Mammary epithelial cell (primary cell): ENCODE measurements at regions of chr15 and their contacts with region 1.

Region 1: GRCh38 chr15:81000624-81001151 is at the start of gene TLNRD1:
- DNase-seq: peak; percentile 87
- H3K4me3 ChIP-seq: peak within 1 kb of the TSS; percentile 54 to 80 (median 72)
- H3K27ac ChIP-seq: peak within 1 kb of the TSS; percentile 90
- H3K4me1 ChIP-seq: peaks cover 13% of the 10 kb centered on the region
- H3K27me3 ChIP-seq: no peaks in the 10 kb centered on the region
- CTCF ChIP-seq: no peak
- total RNA-seq, gene TLNRD1: 16.8 to 18.1 TPM

Region 2: DNA sequence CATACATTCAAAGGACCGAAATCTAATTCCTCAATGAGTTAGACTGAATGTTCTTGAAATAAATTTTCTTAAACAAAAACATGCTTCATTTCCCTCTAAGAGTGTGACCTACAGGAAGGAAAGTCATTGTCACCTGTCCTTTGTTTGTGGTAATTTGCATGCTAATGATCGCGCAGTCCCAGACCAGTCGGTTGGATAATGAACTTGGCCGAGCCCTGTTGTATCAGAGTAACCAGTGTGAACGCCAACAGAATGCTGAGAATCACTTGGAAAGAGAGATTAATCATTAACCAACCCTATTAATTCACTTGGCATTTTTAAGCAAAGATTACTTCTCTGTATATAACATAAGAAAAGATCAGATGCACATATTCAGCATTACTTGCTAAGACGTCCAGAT is 604.6 kb before region 1 on chr15:
- CTCF ChIA-PET with region 1: no interaction called
- dilution Hi-C with region 1: no loop called
- in situ Hi-C with region 1: no loop called
- intact Hi-C with region 1: no loop called
- DNase-seq: no peak
- H3K4me3 ChIP-seq: no peak overlapping the region
- H3K27ac ChIP-seq: no peak overlapping the region
- H3K4me1 ChIP-seq: no peaks in the 10 kb centered on the region
- H3K27me3 ChIP-seq: peaks cover 2% of the 10 kb centered on the region
- CTCF ChIP-seq: no peak

Region 3: DNA sequence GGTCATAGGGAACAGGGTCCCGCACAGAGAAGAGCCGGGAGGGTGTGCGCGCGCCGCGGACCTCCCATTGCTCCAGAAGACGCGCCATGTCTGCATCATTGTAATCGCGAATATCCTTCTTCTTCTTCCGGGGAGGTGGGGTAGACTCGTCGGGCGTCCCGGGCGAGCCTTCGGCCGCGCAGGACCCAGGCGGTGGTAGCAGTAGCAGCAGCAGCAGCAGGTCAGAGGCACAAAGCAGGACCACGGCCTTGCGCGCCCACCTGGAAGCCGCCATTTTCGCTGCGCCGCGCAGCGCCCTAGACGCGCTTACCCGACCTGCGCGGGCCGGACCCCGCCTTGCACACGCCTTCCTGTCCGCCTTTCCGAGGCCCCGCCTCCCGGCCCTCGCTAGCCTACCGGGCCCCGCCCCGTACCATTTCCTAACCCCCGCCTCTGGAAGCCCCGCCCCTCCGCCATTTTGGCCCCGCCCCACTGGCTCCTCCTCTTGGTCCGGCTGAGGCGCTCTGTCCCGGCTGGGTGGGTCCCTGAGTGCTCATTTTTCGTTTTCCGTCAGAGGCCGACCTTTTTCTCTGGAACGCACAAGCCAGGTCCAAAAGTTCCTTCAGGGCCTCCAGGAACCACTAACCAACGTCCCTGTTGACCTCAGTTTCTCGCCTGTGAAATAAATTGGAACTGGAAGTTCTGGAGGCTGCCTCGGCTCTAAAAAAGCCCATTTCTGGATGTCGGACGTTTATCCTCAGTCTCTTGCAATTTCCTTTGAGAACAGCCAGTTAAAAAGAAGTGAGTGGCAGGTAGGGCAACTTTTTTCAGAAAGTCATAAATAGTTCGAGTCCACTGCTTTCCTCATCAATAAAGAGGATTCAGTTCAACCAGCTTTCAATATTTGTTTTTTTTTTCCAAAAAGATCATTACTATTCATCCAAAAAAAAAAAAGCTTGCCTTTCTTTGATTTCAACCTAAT is 10.9 kb before region 1 on chr15 and contains the start of gene MESD:
- CTCF ChIA-PET with region 1: no interaction called
- dilution Hi-C with region 1: no loop called
- in situ Hi-C with region 1: no loop called
- intact Hi-C with region 1: loop called (anchors 1 kb)
- DNase-seq: peak; percentile 91
- H3K4me3 ChIP-seq: peak within 1 kb of the TSS; percentile 78 to 99 (median 90)
- H3K27ac ChIP-seq: peak within 1 kb of the TSS; percentile 71
- H3K4me1 ChIP-seq: peaks cover 18% of the 10 kb centered on the region
- H3K27me3 ChIP-seq: no peaks in the 10 kb centered on the region
- CTCF ChIP-seq: no peak
- total RNA-seq, gene MESD: 13.2 to 25.9 TPM

Region 4: GRCh38 chr15:81106560-81106959 is 105.9 kb after region 1 on chr15:
- CTCF ChIA-PET with region 1: no interaction called
- dilution Hi-C with region 1: no loop called
- in situ Hi-C with region 1: no loop called
- intact Hi-C with region 1: loop called (anchors 2 kb)
- DNase-seq: peak; percentile 67
- H3K4me3 ChIP-seq: no peak overlapping the region
- H3K27ac ChIP-seq: no peak overlapping the region
- H3K4me1 ChIP-seq: peaks cover 11% of the 10 kb centered on the region
- H3K27me3 ChIP-seq: no peaks in the 10 kb centered on the region
- CTCF ChIP-seq: peak; percentile 79 to 82